ENCODE measurements at regions of chr3 and their contacts with region 1.

Region 1: DNA sequence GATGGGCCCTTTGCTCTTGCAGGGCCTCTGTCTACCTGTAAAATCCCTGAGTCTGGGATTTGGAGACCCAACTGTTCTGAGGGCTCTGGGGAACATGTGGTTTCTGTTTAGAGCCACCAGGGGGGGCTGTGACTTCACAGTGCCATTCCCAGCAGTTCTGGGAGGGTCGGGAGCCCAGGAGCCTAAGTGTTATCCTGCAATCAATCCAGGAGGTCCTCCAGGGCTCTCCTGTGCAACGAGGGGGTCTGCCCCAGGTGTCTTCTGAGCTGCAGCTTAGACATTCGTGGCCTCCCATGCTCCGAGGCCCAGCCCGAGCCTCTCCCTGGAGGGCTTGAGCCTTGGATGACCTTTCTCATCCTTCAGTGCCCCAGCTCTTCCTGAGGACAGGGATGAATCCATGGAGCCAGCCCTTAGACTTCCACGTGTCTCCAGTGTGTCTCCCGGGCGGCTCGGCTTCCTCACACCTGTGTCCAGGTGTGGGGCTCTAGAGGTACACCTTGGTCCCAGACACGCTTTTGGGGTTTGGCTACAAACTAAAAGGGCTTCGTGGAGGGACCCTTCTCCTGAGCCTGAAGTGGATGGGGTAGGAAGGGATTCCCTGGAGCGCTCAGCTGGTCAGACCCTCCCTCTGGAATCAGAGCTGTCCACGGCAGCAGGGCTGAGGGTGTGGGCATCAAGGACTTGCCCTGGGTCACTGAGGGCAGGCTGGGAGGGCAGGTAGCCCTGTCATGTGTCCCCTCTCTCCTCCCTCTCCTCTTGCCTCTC is 20.3 kb upstream of the ABTB1 start:
- DNase-seq: peak; percentile 80
- H3K4me3 ChIP-seq: no peak overlapping the region
- H3K27ac ChIP-seq: no peak overlapping the region
- H3K4me1 ChIP-seq: peaks cover 0 to 6% (median 4%) of the 10 kb centered on the region in 6 donors
- H3K27me3 ChIP-seq: peaks cover 0 to 10% (median 0%) of the 10 kb centered on the region in 7 donors
- CTCF ChIP-seq: peak; percentile 48 to 93 (median 83)
- POLR2A ChIP-seq: no peak

Region 2: GRCh38 chr3:127105587-127105986 is 546.8 kb before region 1 on chr3:
- intact Hi-C with region 1: no loop called
- DNase-seq: no peak
- H3K4me3 ChIP-seq: no peak overlapping the region
- H3K27ac ChIP-seq: no peak overlapping the region
- H3K4me1 ChIP-seq: no peaks in the 10 kb centered on the region
- H3K27me3 ChIP-seq: peaks cover 0 to 8% (median 0%) of the 10 kb centered on the region in 7 donors
- CTCF ChIP-seq: no peak
- POLR2A ChIP-seq: no peak

Region 3: DNA sequence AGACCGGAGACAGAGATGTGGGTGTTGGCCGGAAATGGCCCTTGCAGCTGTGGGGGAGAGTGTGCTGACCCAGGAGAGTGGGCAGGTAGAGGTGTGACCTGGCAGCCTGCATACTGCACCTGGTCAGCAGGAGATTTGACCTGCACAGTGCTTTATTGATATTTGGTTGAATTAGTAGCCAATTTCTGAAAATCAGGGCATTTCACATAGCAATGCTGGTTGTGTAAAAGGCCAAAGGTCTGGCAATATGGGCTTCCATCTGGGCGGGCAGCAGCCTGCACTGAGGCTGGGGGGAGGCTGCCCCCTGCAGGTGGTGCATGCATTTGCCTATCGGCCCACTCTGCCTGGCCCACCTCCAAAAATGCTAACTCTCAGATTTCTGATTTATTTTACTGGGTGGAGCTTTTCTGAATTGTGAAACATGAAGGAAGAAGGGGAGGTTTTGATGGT is 179.3 kb after region 1 on chr3:
- intact Hi-C with region 1: loop called (anchors 10 kb)
- DNase-seq: peak; percentile 86
- H3K4me3 ChIP-seq: no peak overlapping the region
- H3K27ac ChIP-seq: no peak overlapping the region
- H3K4me1 ChIP-seq: peaks cover 0 to 9% (median 0%) of the 10 kb centered on the region in 6 donors
- H3K27me3 ChIP-seq: no peaks in the 10 kb centered on the region
- CTCF ChIP-seq: peak; percentile 35 to 87 (median 77)
- POLR2A ChIP-seq: no peak

Region 4: GRCh38 chr3:127970966-127971592 is 318.7 kb after region 1 on chr3:
- intact Hi-C with region 1: loop called (anchors 5 kb)
- DNase-seq: no peak
- H3K4me3 ChIP-seq: no peak overlapping the region
- H3K27ac ChIP-seq: no peak overlapping the region
- H3K4me1 ChIP-seq: no peaks in the 10 kb centered on the region
- H3K27me3 ChIP-seq: peaks cover 0 to 4% (median 0%) of the 10 kb centered on the region in 7 donors
- CTCF ChIP-seq: peak in 10 of 11 experiments; percentile 30 to 71 (median 54)
- POLR2A ChIP-seq: no peak